Activated B cell treated with CpG ODN at 0.5 μM for 24 hours (primary cell): ENCODE measurements at regions of chr5 and their contacts with region 1.

Region 1: GRCh38 chr5:108260117-108260857 is 121.6 kb downstream of the FBXL17 start:
- DNase-seq: no peak
- ATAC-seq: peak; percentile 75
- H3K4me3 Mint-ChIP-seq: peak overlapping the region; percentile 64
- H3K27ac Mint-ChIP-seq: peak overlapping the region; percentile 56
- H3K4me1 Mint-ChIP-seq: peaks cover 7% of the 10 kb centered on the region
- H3K27me3 Mint-ChIP-seq: no peaks in the 10 kb centered on the region
- CTCF ChIP-seq: peak; percentile 64

Region 2: DNA sequence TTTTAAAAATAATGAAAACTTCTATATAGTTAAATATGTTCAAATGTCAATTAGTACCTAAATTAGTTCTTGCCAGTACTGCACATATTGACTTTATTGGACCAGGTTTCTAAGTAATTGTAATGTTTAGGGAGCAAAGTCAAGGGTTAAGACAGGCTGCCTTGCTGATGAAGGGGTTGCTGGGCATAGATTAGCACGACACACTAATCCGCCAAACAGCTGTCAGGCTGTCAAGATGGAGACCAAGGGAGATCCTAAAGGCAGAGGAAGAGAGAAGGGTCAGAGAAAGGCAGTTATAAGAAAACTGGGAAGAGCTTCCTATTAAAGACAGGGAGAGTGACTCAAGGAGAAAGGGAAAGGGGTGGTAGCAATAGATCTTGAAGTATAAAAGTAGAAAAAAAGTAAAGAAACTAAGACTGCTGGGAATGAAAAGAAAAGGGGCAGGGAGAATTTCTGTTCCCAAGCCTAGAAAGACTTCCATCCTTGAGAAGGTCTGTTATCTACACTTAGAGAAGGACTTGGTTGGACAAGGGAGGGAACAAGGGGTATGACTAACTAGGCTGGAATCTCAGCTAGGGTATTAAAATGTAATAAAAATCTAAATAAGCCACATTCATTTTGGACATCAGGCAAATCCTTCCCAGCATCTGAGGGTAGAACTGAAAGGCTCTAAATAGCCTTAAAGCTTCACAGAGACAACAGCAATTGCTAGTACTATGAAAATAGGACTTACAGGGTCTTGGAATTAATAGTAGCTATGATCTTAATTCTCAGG is 67.1 kb before region 1 on chr5:
- CTCF ChIA-PET with region 1: no interaction called
- POLR2A ChIA-PET with region 1: no interaction called
- intact Hi-C with region 1: no loop called
- DNase-seq: no peak
- ATAC-seq: no peak
- H3K4me3 Mint-ChIP-seq: no peak overlapping the region
- H3K27ac Mint-ChIP-seq: no peak overlapping the region
- H3K4me1 Mint-ChIP-seq: no peaks in the 10 kb centered on the region
- H3K27me3 Mint-ChIP-seq: no peaks in the 10 kb centered on the region
- CTCF ChIP-seq: no peak

Region 3: GRCh38 chr5:108238936-108239887 is 21.1 kb before region 1 on chr5:
- CTCF ChIA-PET with region 1: interaction called, 10 read pairs
- POLR2A ChIA-PET with region 1: interaction called, 3 read pairs
- intact Hi-C with region 1: no loop called
- DNase-seq: no peak
- ATAC-seq: no peak
- H3K4me3 Mint-ChIP-seq: no peak overlapping the region
- H3K27ac Mint-ChIP-seq: no peak overlapping the region
- H3K4me1 Mint-ChIP-seq: peaks cover 7% of the 10 kb centered on the region
- H3K27me3 Mint-ChIP-seq: no peaks in the 10 kb centered on the region
- CTCF ChIP-seq: no peak

Region 4: DNA sequence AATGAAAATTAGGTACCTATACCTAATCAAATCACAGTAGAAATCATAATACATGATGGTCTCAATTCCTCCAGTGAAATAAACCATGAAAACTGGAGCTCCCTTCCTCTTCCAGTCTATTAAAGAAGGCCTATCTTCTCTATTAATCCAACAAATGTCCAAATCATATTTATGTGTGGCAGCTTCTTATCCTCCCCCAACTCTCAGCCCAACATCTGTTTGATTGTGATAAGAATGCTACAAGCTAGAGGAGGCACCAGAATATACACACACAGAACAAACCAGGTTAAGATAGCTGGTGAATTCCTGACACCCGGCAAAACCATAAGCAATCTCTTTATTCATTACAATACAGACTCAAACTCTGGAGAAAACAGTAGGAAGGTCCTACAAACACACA is 10.8 kb after region 1 on chr5:
- CTCF ChIA-PET with region 1: interaction called, 13 read pairs
- POLR2A ChIA-PET with region 1: no interaction called
- intact Hi-C with region 1: no loop called
- DNase-seq: no peak
- ATAC-seq: no peak
- H3K4me3 Mint-ChIP-seq: no peak overlapping the region
- H3K27ac Mint-ChIP-seq: no peak overlapping the region
- H3K4me1 Mint-ChIP-seq: no peaks in the 10 kb centered on the region
- H3K27me3 Mint-ChIP-seq: no peaks in the 10 kb centered on the region
- CTCF ChIP-seq: no peak

Region 5: DNA sequence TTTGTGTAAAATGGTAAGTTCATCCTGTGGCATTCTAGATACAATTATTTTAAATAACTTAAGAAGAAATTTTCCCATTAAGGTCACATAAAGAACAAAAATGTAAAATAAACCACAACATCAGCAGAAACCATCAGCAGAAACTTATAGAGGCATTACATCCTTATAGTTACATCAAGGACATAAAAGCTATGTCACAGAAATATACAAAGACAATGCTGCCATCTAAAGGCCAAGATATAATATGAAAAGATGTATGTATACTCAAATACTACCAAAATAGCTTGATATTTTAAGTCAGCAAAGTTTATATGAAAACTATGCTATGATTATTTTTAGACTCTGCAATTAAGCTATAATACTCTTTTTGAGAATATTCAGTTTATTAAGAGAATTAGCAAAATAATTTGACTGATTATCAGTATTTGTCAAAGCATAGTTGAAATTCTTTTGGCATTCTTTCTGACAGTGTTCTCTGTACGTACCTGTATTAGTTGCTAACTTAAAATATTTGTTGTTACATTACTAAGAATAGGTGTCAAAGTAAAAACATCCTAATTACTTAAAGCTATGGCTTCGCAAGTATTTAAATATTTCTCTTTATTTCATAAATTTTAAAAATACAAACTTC is 85.4 kb after region 1 on chr5:
- CTCF ChIA-PET with region 1: interaction called, 76 read pairs
- POLR2A ChIA-PET with region 1: interaction called, 5 read pairs
- intact Hi-C with region 1: loop called (anchors 1 kb)
- DNase-seq: no peak
- ATAC-seq: no peak
- H3K4me3 Mint-ChIP-seq: no peak overlapping the region
- H3K27ac Mint-ChIP-seq: no peak overlapping the region
- H3K4me1 Mint-ChIP-seq: no peaks in the 10 kb centered on the region
- H3K27me3 Mint-ChIP-seq: no peaks in the 10 kb centered on the region
- CTCF ChIP-seq: no peak

Region 6: DNA sequence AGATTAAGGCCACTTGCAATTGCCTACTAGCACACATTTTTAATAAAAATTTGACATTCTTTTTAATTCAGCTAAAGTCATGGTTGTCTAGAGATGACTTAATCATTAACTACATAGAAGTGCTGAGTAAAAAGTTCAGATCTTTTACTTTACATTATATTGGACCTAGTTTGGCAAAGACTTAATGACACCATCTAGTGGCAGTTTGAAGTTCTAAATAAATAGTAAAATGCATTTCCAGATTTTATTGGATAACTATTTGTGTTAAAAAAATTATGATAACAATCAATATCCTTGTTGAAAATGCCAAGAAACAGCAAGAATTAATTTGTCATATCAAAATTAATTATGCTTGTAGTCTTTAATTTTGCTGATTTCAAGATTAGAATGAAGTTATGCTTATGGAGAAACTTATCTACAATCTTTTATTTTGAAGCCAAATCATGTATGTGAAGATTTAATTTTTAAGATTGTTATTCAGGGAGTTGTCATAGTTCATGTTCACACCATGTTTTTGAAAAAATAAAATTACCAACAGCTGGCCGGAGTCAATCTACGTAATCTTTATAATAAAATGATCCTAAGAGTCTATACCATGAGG is 1219.1 kb after region 1 on chr5:
- CTCF ChIA-PET with region 1: no interaction called
- POLR2A ChIA-PET with region 1: no interaction called
- intact Hi-C with region 1: loop called (anchors 1 kb)
- DNase-seq: no peak
- ATAC-seq: no peak
- H3K4me3 Mint-ChIP-seq: no peak overlapping the region
- H3K27ac Mint-ChIP-seq: no peak overlapping the region
- H3K4me1 Mint-ChIP-seq: peaks cover 7% of the 10 kb centered on the region
- H3K27me3 Mint-ChIP-seq: peaks cover 6% of the 10 kb centered on the region
- CTCF ChIP-seq: no peak